MCF 10A (cell line): ENCODE measurements at regions of chr11 and their contacts with region 1.

Region 1: GRCh38 chr11:123110356-123110755 is 48.4 kb upstream of the HSPA8 start:
- DNase-seq: no peak
- H3K4me3 Mint-ChIP-seq: no peak overlapping the region
- H3K27ac Mint-ChIP-seq: no peak overlapping the region
- H3K4me1 Mint-ChIP-seq: peaks cover 5% of the 10 kb centered on the region
- H3K27me3 Mint-ChIP-seq: no peaks in the 10 kb centered on the region
- CTCF ChIP-seq: no peak

Region 2: GRCh38 chr11:123063826-123064657 is 46.3 kb before region 1 on chr11:
- CTCF ChIA-PET with region 1: no interaction called
- POLR2A ChIA-PET with region 1: no interaction called
- intact Hi-C with region 1: no loop called
- DNase-seq: no peak
- H3K4me3 Mint-ChIP-seq: peak overlapping the region; percentile 97
- H3K27ac Mint-ChIP-seq: peak overlapping the region; percentile 99
- H3K4me1 Mint-ChIP-seq: peaks cover 35% of the 10 kb centered on the region
- H3K27me3 Mint-ChIP-seq: no peaks in the 10 kb centered on the region
- CTCF ChIP-seq: no peak

Region 3: GRCh38 chr11:123145220-123145619 is 34.9 kb after region 1 on chr11:
- CTCF ChIA-PET with region 1: interaction called, 12 read pairs
- POLR2A ChIA-PET with region 1: interaction called, 3 read pairs
- intact Hi-C with region 1: no loop called
- DNase-seq: peak; percentile 99
- H3K4me3 Mint-ChIP-seq: peak overlapping the region; percentile 57
- H3K27ac Mint-ChIP-seq: peak overlapping the region; percentile 72
- H3K4me1 Mint-ChIP-seq: peaks cover 27% of the 10 kb centered on the region
- H3K27me3 Mint-ChIP-seq: no peaks in the 10 kb centered on the region
- CTCF ChIP-seq: no peak

Region 4: GRCh38 chr11:123183391-123184099 is 73.2 kb after region 1 on chr11:
- CTCF ChIA-PET with region 1: interaction called, 11 read pairs
- POLR2A ChIA-PET with region 1: interaction called, 3 read pairs
- intact Hi-C with region 1: no loop called
- DNase-seq: peak; percentile 71
- H3K4me3 Mint-ChIP-seq: no peak overlapping the region
- H3K27ac Mint-ChIP-seq: peak overlapping the region; percentile 6
- H3K4me1 Mint-ChIP-seq: peaks cover 58% of the 10 kb centered on the region
- H3K27me3 Mint-ChIP-seq: no peaks in the 10 kb centered on the region
- CTCF ChIP-seq: no peak

Region 5: DNA sequence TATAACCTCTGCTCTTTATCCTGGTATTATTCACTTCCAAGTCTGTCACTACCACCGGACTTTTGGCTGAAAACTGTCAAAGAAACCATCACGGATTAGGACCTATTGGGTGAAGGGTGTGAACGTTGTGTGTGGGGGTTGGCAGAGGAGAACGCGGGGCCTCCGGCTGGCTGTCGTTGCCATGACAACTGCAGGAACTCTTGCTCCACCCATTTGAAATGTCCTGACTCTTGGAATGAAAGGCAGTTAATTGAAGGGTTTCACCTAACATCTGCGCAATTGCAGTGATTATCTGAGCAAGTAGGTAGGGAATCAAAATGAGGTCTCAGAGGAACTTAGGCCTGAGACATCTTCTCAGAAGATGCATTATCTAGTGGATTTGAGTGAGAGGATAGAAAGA is 145.6 kb after region 1 on chr11:
- CTCF ChIA-PET with region 1: interaction called, 69 read pairs
- POLR2A ChIA-PET with region 1: interaction called, 4 read pairs
- intact Hi-C with region 1: no loop called
- DNase-seq: no peak
- H3K4me3 Mint-ChIP-seq: no peak overlapping the region
- H3K27ac Mint-ChIP-seq: no peak overlapping the region
- H3K4me1 Mint-ChIP-seq: peaks cover 13% of the 10 kb centered on the region
- H3K27me3 Mint-ChIP-seq: no peaks in the 10 kb centered on the region
- CTCF ChIP-seq: no peak